KBM-7 (cell line): ENCODE measurements at regions of chr11 and their contacts with region 1.

Region 1: DNA sequence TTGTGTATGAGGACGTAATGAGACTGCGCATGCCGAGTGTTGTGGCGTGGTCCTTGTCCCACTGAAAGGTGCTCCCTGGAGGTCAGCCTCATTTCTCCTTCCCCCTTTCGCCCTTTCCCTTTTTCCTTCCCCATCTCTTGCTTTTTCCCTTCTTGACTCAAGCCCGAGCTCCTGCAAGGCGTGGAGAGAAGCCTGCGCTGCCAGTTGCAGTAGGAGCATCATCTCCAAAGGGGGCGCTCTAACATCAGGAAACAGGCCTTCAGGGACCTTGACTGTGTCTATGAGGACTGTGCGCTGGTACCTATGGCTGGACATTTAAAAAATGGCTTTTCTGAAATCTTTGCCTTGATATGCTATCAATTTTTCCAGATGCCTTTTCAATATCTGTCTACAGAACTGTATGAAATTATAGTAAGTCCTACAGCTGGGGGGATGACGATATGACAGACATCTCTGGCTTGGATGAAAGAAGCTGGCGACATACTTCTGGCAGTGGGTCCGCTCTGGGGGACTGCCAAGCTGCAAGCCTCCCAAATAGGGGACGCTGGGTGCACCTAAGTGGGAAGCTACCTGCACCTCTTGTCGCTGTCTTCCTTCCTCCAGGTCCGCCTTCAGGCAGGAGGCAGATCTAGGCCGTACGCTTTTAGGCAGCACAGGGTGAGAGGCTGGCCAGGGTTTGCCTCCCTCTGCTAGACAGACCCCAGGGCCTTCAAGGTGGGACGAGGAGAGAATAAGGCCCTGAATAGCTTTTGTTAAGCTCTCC is 96.5 kb downstream of the NXPE2 start:
- DNase-seq: peak; percentile 50

Region 2: GRCh38 chr11:114340311-114341131 is 434.3 kb before region 1 on chr11:
- in situ Hi-C with region 1: loop called (anchors 25 kb)
- DNase-seq: peak; percentile 55